Esophagus squamous epithelium (tissue), 5 donors: ENCODE measurements at regions of chr16 and their contacts with region 1.

Region 1: GRCh38 chr16:88811769-88812512 is at the start of gene APRT:
- DNase-seq: peak; percentile 50
- H3K4me3 ChIP-seq: peak within 1 kb of the TSS; percentile 64 to 99 (median 74)
- H3K27ac ChIP-seq: peak within 1 kb of the TSS; percentile 92 to 98 (median 94)
- H3K4me1 ChIP-seq: peaks cover 34 to 66% (median 41%) of the 10 kb centered on the region in 3 donors
- H3K27me3 ChIP-seq: no peaks in the 10 kb centered on the region
- CTCF ChIP-seq: peak in 5 of 6 experiments; percentile 8 to 39 (median 15)
- POLR2A ChIP-seq: peak in 2 of 4 donors; percentile 15 to 82
- total RNA-seq, gene APRT: 186 to 314 (median 250) TPM

Region 2: DNA sequence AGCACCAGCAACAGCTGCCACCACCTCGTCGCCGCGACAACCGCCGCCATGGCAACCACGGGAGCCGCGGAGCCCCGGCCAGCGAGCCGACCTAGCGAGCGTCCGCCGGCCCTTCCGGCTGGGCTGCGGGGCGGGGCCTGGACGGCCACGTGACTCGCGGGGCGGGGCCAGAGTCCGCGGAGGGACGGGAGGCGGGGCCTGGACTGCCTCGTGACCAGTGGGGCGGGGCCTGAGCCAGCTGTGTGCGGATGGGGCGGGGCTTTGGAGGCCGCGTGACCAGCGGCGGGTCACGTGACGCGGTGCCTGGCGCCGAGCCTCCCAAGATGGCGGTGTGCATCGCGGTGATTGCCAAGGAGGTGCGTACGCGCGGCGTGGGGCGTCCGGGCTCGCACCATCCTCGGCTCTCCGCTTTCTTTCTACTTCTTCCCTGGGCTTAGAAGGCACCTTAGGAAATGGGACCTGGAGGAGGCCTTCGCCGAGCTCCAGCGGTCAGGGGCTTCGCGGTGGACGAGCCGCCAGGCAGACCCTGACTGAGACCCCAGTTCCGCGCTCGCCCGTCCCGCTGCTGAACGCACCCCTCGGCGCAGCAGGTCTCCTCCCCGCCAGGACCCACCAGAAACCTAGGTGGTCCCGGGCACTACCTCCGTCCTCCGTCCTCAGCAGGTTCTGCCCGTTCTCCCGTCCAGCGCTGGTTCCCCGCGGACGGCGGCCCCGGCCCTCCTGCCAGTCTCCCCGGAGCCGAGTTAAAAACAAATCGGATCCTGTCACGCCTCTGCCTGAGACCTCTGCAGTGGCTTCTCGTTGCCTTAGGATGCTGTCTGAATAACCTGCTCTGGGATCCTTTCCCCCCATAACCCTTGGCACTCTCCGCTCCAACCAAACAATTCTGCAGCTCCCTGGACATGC is 45.1 kb after region 1 on chr16 and contains the starts of genes GALNS and TRAPPC2L:
- intact Hi-C with region 1: loop called (anchors 5 kb)
- DNase-seq: peak; percentile 84
- H3K4me3 ChIP-seq: peak within 1 kb of the TSS; percentile 81 to 99 (median 86)
- H3K27ac ChIP-seq: peak within 1 kb of the TSS; percentile 81 to 90 (median 88)
- H3K4me1 ChIP-seq: peaks cover 16 to 50% (median 21%) of the 10 kb centered on the region in 3 donors
- H3K27me3 ChIP-seq: no peaks in the 10 kb centered on the region
- CTCF ChIP-seq: peak in 1 of 6 experiments; percentile 20
- POLR2A ChIP-seq: peak in 3 of 4 donors; percentile 68 to 82 (median 73)
- total RNA-seq, gene GALNS: 9.5 to 24.2 (median 20.5) TPM
- total RNA-seq, gene TRAPPC2L: 20.7 to 29.7 (median 24.7) TPM

Region 3: DNA sequence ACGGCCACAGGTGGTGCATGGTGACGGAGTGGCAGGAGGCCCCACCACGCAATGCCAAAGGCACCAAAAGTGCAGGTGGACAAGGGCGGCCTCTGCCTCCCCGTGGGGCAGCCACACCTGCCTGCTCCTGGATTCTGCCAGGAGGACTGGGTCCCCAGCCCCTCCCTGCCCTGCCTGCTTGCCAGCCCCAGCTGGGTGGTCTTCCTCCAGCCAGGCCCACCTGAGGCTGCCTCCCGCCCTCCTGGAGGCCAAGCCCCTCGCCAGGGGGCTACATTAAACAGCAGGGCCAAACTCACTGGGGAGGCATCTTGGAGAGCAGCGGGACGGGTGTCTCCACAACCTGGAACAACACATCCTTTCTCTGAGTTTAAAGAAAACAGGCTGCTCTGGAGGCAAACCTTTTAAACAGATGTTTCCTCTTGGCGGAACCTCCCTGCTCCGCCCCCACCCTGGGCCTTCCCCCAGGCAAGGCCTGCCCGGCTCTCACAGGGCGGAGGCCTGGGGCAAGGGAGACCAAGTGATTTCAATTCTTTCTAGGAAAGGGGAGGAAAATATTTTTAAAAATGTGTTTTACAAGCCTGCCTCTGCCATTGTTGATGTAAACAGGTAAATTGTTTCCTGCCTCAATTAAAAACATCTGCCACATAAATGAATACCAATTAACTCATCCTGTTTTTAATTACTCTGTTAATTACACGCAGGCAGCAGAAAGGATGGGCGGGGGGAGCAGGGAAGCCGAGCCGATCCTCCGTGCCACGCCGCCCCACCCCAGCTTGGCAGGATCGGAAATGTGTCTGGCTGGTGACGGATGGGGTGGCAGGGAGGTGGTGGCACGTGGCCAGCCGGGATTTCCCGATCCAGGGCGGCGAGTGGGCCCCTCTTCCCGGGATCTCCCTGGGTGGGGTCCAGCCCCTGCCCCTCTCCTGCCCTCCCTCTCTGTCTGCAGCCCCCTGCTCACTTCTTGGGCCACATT is 109.0 kb after region 1 on chr16:
- intact Hi-C with region 1: no loop called
- DNase-seq: no peak
- H3K4me3 ChIP-seq: peak overlapping the region in 1 of 4 donors; percentile 38
- H3K27ac ChIP-seq: peak overlapping the region; percentile 27 to 81 (median 59)
- H3K4me1 ChIP-seq: peaks cover 39 to 95% (median 55%) of the 10 kb centered on the region in 3 donors
- H3K27me3 ChIP-seq: peaks cover 0 to 28% (median 0%) of the 10 kb centered on the region in 4 donors
- CTCF ChIP-seq: no peak
- POLR2A ChIP-seq: no peak